ENCODE measurements at regions of chr22 and their contacts with region 1.

Region 1: GRCh38 chr22:38927033-38927781 is 30.2 kb upstream of the APOBEC3A start:
- DNase-seq: no peak
- H3K4me3 ChIP-seq: peak overlapping the region; percentile 52 to 58 (median 54)
- H3K27ac ChIP-seq: peak overlapping the region; percentile 77 to 85 (median 81)
- H3K4me1 ChIP-seq: peaks cover 18 to 50% (median 45%) of the 10 kb centered on the region in 4 donors
- H3K27me3 ChIP-seq: no peaks in the 10 kb centered on the region
- CTCF ChIP-seq: peak; percentile 64 to 83 (median 77)
- EP300 ChIP-seq: no peak
- POLR2A ChIP-seq: no peak

Region 2: DNA sequence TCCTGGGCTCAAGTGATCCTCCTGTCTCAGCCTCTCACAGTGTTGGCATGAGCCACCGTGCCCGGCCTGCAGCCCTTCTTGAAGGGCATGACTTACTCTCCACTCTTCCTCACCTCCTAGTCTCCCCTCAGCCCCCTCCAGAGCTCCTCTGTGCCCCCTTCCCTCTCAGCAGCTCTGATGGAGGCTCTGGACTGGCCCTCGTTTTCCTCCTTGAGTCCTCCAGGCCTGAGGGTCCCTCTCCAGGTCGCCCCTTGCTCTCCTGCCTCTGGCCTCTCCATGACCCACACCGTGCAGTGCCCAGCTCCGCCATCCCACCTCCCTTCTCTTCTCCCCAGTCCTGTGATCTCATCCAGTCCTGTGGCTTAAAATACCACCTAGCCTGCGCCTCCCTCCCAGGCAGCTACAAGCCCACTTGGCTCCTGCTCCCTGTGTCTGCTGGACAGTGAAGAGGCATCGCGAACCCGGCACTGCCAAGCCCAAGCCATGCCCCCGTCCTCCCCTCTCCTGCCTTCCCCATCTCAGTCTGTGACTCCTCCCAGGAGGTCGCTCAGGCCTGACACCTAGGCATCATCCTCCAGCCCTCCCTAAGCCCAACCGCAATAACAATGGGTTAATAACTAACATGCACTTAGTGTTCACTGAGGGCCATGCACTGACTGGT is 484.1 kb before region 1 on chr22:
- intact Hi-C with region 1: no loop called
- DNase-seq: no peak
- H3K4me3 ChIP-seq: no peak overlapping the region
- H3K27ac ChIP-seq: no peak overlapping the region
- H3K4me1 ChIP-seq: peaks cover 0 to 8% (median 0%) of the 10 kb centered on the region in 4 donors
- H3K27me3 ChIP-seq: peaks cover 0 to 55% (median 2%) of the 10 kb centered on the region in 4 donors
- CTCF ChIP-seq: no peak
- EP300 ChIP-seq: no peak
- POLR2A ChIP-seq: no peak

Region 3: GRCh38 chr22:38886333-38886732 is 40.9 kb before region 1 on chr22:
- intact Hi-C with region 1: loop called (anchors 5 kb)
- DNase-seq: no peak
- H3K4me3 ChIP-seq: no peak overlapping the region
- H3K27ac ChIP-seq: no peak overlapping the region
- H3K4me1 ChIP-seq: peaks cover 17 to 22% (median 20%) of the 10 kb centered on the region in 4 donors
- H3K27me3 ChIP-seq: no peaks in the 10 kb centered on the region
- CTCF ChIP-seq: no peak
- EP300 ChIP-seq: no peak
- POLR2A ChIP-seq: no peak

Region 4: GRCh38 chr22:38981992-38982927 is 55.1 kb after region 1 on chr22 and contains the start of gene APOBEC3B:
- intact Hi-C with region 1: loop called (anchors 10 kb)
- DNase-seq: peak; percentile 94
- H3K4me3 ChIP-seq: peak within 1 kb of the TSS in 3 of 4 donors; percentile 51 to 62 (median 58)
- H3K27ac ChIP-seq: peak within 1 kb of the TSS in 3 of 4 donors; percentile 63 to 73 (median 69)
- H3K4me1 ChIP-seq: peaks cover 0 to 22% (median 16%) of the 10 kb centered on the region in 4 donors
- H3K27me3 ChIP-seq: no peaks in the 10 kb centered on the region
- CTCF ChIP-seq: no peak
- EP300 ChIP-seq: no peak
- POLR2A ChIP-seq: no peak
- total RNA-seq, gene APOBEC3B: 0.50 TPM in 1 of 4 donors, not detected in the others

Region 5: DNA sequence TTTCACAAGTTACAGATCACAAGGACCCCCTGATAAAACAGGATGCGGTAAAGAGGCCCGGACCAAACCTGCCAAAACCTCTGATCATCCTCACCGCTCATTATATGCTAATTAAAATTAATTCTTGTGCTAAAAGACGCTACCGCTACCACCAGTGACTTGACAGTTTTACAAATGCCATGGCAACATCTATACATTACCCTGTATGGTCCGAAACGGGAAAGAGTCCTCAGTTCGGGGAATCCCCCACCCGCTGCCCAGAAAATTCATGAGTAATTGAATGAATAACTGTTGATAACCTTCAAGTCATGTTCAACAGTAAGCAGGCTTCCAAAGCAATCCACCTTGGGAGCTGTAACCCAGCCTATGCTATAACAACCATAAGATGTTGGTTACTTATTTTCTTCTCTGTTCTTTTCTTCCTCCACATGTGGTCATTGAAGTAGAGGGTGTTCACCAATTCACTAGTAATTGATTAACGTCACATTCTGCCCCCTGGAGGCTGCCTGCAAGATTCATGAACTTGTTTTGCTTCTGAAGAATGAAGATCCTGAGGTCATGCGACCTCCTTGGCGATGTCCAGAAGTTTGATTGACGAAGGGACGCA is 190.5 kb after region 1 on chr22:
- intact Hi-C with region 1: no loop called
- DNase-seq: no peak
- H3K4me3 ChIP-seq: no peak overlapping the region
- H3K27ac ChIP-seq: no peak overlapping the region
- H3K4me1 ChIP-seq: no peaks in the 10 kb centered on the region
- H3K27me3 ChIP-seq: peaks cover 0 to 13% (median 0%) of the 10 kb centered on the region in 4 donors
- CTCF ChIP-seq: peak; percentile 19 to 41 (median 32)
- EP300 ChIP-seq: no peak
- POLR2A ChIP-seq: no peak